ENCODE measurements at regions of chr7 and their contacts with region 1.

Region 1: DNA sequence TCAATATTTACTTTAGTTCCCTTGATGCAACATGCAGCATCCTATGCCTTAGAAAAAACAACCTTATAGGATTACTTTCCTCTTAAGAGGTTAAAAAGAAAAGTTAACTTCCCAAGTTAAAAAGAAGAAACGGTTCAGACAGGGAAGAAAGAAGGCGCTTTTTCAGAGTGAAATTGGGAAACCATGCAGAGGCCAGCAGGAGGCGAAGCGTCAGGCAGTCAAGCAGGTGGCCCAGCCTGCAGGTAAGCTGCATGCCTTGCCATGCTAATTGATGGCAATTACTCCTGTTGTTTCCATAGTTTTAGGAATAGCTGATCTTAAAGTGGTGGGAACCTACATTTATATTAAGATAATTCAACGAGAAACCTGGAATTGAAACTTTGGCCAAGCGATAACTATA is 302.6 kb upstream of the SP4 start:
- DNase-seq: no peak
- ATAC-seq: no peak

Region 2: DNA sequence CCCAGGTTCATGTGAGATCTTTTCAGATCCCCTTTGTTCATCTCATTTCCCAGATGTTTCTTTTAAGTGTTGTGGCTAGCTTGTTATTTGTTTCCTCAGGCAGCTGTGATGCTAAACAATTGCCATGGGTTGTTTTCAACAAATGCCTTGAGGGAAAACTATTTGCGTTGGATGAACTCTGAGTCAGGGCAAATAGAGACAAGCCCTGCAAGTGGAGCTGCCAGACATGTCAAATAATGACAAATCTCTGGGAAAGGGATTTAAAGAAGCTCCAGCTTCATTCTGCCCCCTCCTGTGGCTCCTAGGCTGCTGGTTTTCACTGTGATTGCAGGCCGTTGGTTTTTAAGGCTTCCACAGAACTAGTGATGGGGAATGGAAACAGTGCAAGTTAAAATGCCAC is 66.2 kb before region 1 on chr7:
- intact Hi-C with region 1: loop called (anchors 2 kb)
- DNase-seq: no peak
- ATAC-seq: no peak

Measured in Right ventricle myocardium inferior (tissue), 1 donor.